Lower lobe of right lung (tissue), 2 donors: ENCODE measurements at regions of chr1 and their contacts with region 1.

Region 1: DNA sequence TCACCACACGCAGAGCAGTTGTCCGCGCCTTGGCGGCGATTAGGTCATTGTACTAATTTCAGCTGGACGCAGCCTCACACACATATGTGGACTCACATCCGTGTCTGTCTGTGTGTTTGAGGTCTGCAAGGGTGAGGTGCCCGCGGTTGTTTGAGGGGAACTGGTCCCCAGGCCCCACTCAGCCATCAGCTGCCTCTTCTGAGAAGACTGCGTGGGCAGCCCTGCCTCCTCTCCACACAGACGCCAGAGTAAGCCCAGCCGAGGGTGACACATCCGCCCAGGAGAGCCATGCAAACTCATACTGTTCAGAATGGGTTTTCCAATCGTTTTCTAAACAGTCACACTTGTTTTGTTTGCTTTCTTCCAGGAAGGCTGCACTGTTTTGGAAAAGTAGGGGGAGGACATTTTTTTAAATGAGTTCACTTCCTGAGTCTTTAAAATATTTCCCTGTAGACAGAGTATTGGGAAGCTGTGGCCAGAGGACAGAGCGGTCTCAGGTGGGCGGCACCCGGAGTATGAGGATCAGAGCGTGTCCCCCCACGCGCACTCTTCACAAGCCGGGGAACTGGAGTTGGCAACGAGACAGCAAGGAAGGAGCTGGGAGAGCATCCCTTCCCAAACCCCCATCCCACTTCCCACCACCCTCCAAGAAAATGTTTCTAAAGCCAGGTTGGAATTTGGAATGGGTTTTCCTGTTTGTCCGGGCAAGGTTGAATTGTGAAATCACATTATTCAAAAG is 53.3 kb downstream of the TOMM20 start:
- DNase-seq: peak; percentile 81
- ATAC-seq: peak; percentile 69 to 81
- H3K4me3 ChIP-seq: peak overlapping the region; percentile 4
- H3K27ac ChIP-seq: peak overlapping the region; percentile 84
- H3K4me1 ChIP-seq: peaks cover 84% of the 10 kb centered on the region
- H3K27me3 ChIP-seq: no peaks in the 10 kb centered on the region
- CTCF ChIP-seq: no peak

Region 2: DNA sequence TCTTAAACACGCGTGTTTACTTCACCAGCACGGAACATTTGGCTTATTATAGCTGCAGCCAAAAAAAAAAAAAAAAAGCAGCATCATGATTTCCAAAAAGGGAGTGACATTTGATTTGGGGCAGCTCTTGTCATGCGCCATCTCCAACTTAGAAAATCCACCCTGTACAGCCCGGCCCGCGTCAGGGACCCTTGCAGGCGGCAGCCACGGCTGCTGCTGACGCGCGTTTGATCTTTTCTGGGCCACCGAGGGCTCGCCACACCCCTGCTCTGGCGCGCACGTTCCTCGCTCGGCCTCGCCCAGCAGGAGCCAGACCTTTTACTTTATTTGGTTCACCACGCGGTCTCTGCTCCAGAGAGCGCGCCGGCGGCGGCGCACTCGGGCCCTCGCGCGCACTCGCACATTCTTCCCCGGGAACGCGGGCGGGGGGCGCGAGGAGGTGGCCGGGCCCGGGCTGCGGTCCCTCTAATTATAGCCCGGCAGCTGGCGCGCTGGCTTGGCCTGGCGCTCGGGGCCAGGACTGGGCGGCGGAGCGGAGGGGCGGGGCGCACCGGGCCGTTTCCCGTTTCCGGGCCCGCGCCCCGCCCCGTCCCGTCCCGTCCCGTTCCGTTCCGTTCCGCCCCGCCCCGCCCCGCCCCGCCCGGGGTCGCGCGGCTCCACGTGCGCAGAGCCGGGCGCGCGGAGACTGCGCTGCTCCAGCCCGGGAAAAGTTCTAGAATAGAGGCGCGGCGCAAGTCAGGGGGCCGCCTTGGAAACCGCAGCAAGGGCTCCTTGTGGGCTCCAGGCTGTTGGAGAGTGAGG is 475.5 kb before region 1 on chr1:
- intact Hi-C with region 1: loop called (anchors 10 kb)
- DNase-seq: peak; percentile 89
- ATAC-seq: peak; percentile 92 to 96
- H3K4me3 ChIP-seq: peak overlapping the region; percentile 59
- H3K27ac ChIP-seq: peak overlapping the region; percentile 100
- H3K4me1 ChIP-seq: peaks cover 64% of the 10 kb centered on the region
- H3K27me3 ChIP-seq: no peaks in the 10 kb centered on the region
- CTCF ChIP-seq: no peak

Region 3: DNA sequence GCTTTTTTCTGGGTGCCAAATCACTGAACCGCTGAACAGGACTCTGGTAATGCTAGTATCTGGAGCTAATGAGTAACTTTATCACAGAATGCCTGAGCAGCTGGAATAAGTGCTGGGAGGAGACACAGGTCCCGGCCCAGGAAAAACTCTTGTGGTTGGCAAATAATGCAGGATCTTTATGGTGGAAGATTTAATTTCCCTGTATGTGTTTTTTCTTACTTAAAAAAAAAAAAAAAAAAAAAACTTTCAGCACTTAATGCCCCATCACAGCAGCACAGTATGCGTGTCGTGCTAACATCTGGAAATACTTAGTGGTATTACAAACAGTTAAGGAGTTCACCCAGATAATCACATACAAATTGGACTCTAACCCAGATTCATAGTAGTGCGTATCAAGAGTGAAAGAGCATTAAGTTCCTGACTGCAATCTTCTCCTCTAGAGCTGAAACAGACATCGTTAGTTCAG is 167.4 kb before region 1 on chr1:
- intact Hi-C with region 1: no loop called
- DNase-seq: no peak
- ATAC-seq: peak; percentile 52 to 70
- H3K4me3 ChIP-seq: no peak overlapping the region
- H3K27ac ChIP-seq: peak overlapping the region; percentile 53
- H3K4me1 ChIP-seq: peaks cover 32% of the 10 kb centered on the region
- H3K27me3 ChIP-seq: no peaks in the 10 kb centered on the region
- CTCF ChIP-seq: no peak

Region 4: DNA sequence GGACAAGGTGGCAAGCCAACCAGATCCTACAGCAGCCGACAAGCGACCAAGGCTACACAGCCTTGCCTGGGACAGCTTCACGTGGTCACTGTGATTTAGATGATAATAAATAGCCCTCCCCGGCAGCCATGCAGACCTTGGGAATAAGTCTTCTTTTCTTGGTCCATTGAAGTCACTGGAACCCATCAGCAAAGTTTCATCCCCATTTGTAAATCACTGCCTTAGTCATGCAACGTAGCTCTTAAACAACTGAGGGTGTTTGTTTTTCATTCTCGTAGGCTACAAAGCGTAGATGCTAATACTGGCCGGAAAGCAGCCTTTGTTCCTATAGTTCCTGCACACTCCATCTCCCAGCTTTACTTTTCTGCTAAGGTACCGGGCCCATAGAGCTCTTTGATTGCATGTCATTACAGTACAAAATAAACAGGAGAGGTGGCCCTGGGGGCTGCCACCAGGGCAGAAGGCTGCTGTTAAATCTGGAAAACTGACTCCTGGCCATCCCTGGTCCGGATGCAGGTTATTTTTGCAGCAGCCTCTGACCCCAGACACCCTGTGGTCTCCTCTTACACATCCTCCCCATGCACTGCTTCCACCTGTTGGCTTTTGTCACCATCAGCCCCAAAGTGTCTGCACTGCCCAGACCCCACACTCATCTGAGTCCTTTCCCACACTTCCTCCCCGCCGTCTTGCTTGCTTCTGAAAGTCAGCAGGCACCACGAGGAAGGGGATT is 52.2 kb before region 1 on chr1:
- intact Hi-C with region 1: no loop called
- DNase-seq: no peak
- ATAC-seq: no peak
- H3K4me3 ChIP-seq: no peak overlapping the region
- H3K27ac ChIP-seq: peak overlapping the region; percentile 41
- H3K4me1 ChIP-seq: no peaks in the 10 kb centered on the region
- H3K27me3 ChIP-seq: no peaks in the 10 kb centered on the region
- CTCF ChIP-seq: no peak

Region 5: DNA sequence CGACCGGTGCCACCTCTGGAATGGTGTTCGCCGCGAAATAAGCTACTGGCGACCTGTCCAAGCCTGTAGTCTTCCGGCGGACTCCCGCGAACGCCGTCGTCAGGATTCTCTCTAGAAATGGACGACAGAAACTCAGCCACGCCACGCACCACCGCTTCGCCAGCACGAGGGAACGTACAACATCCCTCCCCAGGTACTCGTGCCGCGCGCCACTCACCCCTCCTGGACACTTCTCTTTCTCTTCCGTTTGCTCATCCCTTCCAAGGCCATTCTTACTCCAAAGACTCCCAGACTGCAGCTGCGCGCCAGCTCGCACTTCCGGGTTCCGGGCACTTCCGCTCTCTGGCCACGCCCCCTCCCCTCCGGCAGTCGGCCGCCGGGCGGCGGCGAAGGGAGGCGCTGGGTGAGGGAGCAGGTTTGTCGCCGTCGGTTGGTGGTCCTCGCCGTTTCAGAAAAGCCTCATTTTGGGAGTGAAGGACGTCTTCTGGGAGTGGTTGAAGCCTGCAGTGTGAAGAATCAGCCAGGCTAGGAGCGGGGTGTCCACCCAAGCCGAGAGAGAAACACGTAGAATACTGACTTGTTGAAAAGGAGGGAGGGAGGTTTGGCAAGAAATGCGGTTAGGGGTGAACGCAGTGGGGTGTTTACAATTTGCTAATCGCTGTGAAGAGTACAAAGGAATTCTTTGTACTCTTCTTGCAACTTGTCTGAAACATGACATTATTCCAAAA is 85.8 kb after region 1 on chr1 and contains the start of gene RBM34:
- intact Hi-C with region 1: no loop called
- DNase-seq: peak; percentile 94
- ATAC-seq: peak; percentile 99
- H3K4me3 ChIP-seq: peak within 1 kb of the TSS; percentile 87
- H3K27ac ChIP-seq: peak within 1 kb of the TSS; percentile 95
- H3K4me1 ChIP-seq: peaks cover 36% of the 10 kb centered on the region
- H3K27me3 ChIP-seq: no peaks in the 10 kb centered on the region
- CTCF ChIP-seq: no peak
- total RNA-seq, gene RBM34: 57.3 TPM

Region 6: DNA sequence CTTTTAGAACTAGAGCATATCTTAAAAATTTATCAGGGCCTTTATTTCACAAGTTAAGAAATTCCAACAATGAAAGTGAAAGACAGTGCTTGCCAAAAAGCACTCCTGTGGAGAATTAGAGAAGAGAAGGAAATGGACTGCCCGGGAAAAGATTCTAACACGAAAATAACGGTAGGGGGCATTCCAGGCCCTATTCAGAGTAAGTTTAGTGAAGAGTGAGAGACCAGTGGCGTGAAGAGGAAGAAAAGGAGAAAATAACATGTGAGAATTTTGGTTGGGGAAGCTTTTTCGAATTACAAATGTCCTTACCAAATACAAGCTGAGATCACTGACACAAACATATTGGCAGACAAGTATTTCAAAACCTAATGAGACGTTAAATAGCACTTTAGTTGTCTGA is 124.1 kb after region 1 on chr1:
- intact Hi-C with region 1: no loop called
- DNase-seq: no peak
- ATAC-seq: peak; percentile 29 to 59
- H3K4me3 ChIP-seq: no peak overlapping the region
- H3K27ac ChIP-seq: no peak overlapping the region
- H3K4me1 ChIP-seq: no peaks in the 10 kb centered on the region
- H3K27me3 ChIP-seq: no peaks in the 10 kb centered on the region
- CTCF ChIP-seq: peak; percentile 31